ENCODE measurements at regions of chr9 and their contacts with region 1.

Region 1: DNA sequence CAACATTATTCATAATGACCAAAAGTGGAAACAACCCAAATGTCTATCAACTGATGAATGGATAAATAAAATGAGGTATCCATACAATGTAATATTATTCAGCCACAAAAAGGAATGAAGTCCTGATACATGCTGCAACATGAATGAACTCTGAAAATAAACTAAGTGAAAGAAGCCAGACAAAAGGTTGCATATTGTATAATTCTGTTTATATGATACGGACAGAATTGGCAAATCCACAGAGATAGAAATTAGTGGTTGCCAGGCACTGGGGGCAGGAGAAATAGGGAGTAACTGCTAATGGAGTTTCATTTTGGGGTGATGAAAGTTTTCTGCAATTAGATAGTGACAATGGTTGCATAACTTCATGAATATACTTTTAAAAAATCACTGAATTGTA is 47.0 kb downstream of the KIF24 start:
- DNase-seq: no peak
- H3K27ac ChIP-seq: no peak overlapping the region
- CTCF ChIP-seq: no peak

Region 2: DNA sequence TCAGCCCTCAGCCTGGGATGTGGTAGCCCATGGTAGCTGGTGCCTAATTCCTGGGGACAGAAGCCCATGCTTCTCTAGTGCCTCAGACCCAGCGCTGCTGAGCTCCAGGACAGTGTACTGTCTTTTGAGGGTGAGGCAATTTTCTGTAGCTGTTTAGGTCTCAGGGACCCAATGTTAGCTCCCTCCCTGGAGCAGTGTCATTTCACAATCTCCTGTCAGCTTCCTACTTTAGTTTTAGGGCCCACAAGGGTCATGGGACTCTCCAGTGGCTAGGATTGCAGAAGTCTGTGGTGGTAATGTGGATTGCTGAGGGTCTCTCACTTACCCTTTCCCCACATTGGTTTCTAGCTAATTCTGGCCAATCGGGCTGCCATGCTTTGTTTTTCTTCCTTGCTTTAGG is 495.6 kb after region 1 on chr9:
- CTCF ChIA-PET with region 1: no interaction called
- POLR2A ChIA-PET with region 1: interaction called, 11 read pairs
- DNase-seq: no peak
- H3K27ac ChIP-seq: no peak overlapping the region
- CTCF ChIP-seq: no peak

Measured in RWPE1 (cell line).